GM12878 (cell line): ENCODE measurements at regions of chr18 and their contacts with region 1.

Region 1: GRCh38 chr18:59918320-59918755 is 18.5 kb downstream of the PMAIP1 start:
- DNase-seq: peak; percentile 80
- ATAC-seq: peak; percentile 82
- H3K4me3 ChIP-seq: peak overlapping the region; percentile 5; the same call in 1 of the 2 replicates
- H3K27ac ChIP-seq: peak overlapping the region; percentile 74
- H3K4me1 ChIP-seq: peaks cover 47% of the 10 kb centered on the region
- H3K27me3 ChIP-seq: no peaks in the 10 kb centered on the region
- CTCF ChIP-seq: no peak
- EP300 ChIP-seq: peak in 1 of 2 experiments; percentile 27; a peak in 1 of 4 replicates
- POLR2A ChIP-seq: peak; percentile 44; the same call in 1 of the 2 replicates
- RAD21 ChIP-seq: no peak

Region 2: DNA sequence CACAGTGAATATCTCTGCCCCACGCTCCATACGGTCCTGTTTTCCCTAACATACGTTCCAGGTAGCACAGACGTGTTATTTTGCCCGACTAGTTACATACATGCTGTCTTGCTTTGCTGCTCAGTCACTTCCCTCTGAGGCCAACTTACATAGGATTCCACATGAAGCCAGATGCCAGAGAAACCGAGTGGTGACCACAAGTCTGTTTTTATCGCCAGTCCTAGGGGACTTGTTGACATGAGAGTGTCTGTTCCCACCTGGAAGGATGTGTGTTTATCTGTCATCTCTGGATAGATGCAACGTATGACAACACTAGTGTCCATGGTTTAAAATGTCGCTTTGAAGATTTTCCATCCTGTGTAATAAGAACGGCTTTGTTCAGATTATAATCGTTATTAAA is 14.1 kb after region 1 on chr18:
- CTCF ChIA-PET with region 1: interaction called, 9 read pairs
- POLR2A ChIA-PET with region 1: interaction called, 14 read pairs
- RAD21 ChIA-PET with region 1: interaction called, 27 read pairs
- SMC1A ChIA-PET with region 1: interaction called, 289 read pairs
- in situ Hi-C with region 1: no loop called
- intact Hi-C with region 1: no loop called
- DNase-seq: no peak
- ATAC-seq: no peak
- H3K4me3 ChIP-seq: no peak overlapping the region
- H3K27ac ChIP-seq: no peak overlapping the region
- H3K4me1 ChIP-seq: peaks cover 13% of the 10 kb centered on the region
- H3K27me3 ChIP-seq: no peaks in the 10 kb centered on the region
- CTCF ChIP-seq: no peak
- EP300 ChIP-seq: no peak
- POLR2A ChIP-seq: no peak
- RAD21 ChIP-seq: no peak

Region 3: GRCh38 chr18:59950215-59950944 is 32.0 kb after region 1 on chr18:
- CTCF ChIA-PET with region 1: interaction called, 15 read pairs
- POLR2A ChIA-PET with region 1: interaction called, 23 read pairs
- RAD21 ChIA-PET with region 1: interaction called, 54 read pairs
- SMC1A ChIA-PET with region 1: interaction called, 257 read pairs
- in situ Hi-C with region 1: no loop called
- intact Hi-C with region 1: no loop called
- DNase-seq: no peak
- ATAC-seq: peak; percentile 48
- H3K4me3 ChIP-seq: no peak overlapping the region; the same call in 1 of the 2 replicates
- H3K27ac ChIP-seq: no peak overlapping the region
- H3K4me1 ChIP-seq: peaks cover 40% of the 10 kb centered on the region
- H3K27me3 ChIP-seq: no peaks in the 10 kb centered on the region
- CTCF ChIP-seq: no peak
- EP300 ChIP-seq: 0 out of 4 replicates have a peak, but pooled peaks of 1 of the 2 experiments have one; percentile 49
- POLR2A ChIP-seq: no peak
- RAD21 ChIP-seq: no peak